ENCODE measurements at regions of chr3 and their contacts with region 1.

Region 1: GRCh38 chr3:32570421-32571191 is at the start of gene DYNC1LI1:
- DNase-seq: peak; percentile 94 to 95
- ATAC-seq: peak; percentile 88 to 91
- H3K4me3 ChIP-seq: peak within 1 kb of the TSS; percentile 73 to 98 (median 86)
- H3K27ac ChIP-seq: peak within 1 kb of the TSS; percentile 96 to 99 (median 98)
- H3K4me1 ChIP-seq: peaks cover 17 to 28% of the 10 kb centered on the region in 2 donors
- H3K27me3 ChIP-seq: no peaks in the 10 kb centered on the region
- CTCF ChIP-seq: peak in 1 of 5 experiments; percentile 7
- POLR2A ChIP-seq: peak; percentile 87 to 88
- total RNA-seq, gene DYNC1LI1: 44.2 to 51.0 (median 47.9) TPM

Region 2: DNA sequence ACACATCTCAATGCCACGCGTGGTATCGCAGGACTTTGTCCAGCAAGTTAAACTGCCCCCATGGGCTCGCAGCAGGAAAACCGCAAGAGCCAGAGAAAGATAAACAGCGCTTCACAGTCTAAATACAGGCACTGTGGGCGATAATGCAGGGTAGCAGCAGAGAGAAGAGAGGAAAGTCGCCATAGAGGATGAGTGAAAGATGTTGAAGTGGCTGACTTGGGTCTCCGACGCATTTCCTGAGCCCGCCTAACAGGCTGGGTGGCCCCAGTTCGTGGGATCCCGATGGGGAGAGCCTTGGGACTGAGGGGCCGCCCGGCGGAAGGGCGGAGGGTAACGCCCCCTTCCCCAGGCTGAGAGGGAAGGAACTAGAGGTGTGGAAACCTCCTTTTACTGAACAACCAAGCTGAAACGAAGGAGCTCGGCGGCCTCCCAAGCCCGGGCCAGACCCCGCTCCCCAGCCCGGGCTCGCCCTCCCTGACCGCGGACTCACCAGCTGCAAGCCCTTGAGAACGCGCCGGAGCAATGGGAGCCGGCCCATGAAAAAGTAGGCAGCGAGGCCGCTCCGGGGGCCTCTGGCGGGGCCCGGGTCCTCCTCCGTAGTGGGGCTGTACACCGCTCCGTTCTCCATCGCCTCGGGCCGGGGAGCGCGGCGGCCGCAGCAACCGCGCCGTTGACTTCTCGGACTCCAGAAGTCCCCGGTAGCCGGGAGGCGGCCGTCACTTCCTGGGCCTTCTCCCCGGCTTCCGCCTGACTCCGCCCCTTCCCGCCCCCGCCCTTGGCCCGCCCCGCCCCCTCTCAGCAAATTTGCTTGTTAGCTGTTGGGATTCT is 68.3 kb before region 1 on chr3 and contains the start of gene CMTM6:
- in situ Hi-C with region 1: no loop called
- intact Hi-C with region 1: loop called (anchors 2 kb)
- DNase-seq: peak; percentile 68 to 71
- ATAC-seq: peak; percentile 95 to 96
- H3K4me3 ChIP-seq: peak within 1 kb of the TSS; percentile 86 to 99 (median 93)
- H3K27ac ChIP-seq: peak within 1 kb of the TSS; percentile 91 to 94 (median 94)
- H3K4me1 ChIP-seq: peaks cover 9 to 14% of the 10 kb centered on the region in 2 donors
- H3K27me3 ChIP-seq: no peaks in the 10 kb centered on the region
- CTCF ChIP-seq: no peak
- POLR2A ChIP-seq: peak; percentile 62 to 63
- total RNA-seq, gene CMTM6: 3.7 to 8.8 (median 7.3) TPM

Region 3: DNA sequence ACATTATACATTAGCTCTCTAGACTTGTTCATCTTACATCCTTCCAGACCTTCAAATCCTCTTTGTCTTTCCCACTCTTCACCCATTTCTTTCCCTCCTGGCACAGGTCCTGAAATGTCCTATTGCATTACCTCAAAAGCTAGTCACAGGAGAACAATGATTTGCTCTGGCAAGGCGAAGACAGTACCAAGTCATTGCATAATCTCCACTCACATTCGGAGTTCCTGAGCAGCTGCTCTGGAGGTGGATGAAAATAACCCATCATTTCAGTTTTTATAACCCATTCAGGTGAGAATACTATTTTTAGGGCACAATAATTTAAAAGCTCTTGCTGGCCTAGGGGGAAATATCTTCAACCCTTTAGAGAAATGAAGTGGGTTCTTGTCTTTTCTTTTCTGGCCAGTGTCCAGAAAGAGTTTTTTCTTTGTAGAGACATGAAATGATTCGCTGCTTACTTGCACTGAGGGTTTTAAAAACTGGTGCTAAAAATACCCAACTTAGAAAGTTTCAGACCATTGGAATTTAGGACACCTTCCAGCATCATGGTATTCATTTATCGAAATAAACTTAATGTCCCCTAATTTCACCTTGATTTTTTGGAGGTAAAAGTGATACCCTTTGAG is 23.4 kb after region 1 on chr3:
- in situ Hi-C with region 1: no loop called
- intact Hi-C with region 1: loop called (anchors 2 kb)
- DNase-seq: no peak
- ATAC-seq: peak; percentile 39 to 56
- H3K4me3 ChIP-seq: no peak overlapping the region
- H3K27ac ChIP-seq: no peak overlapping the region
- H3K4me1 ChIP-seq: peaks cover 10 to 23% of the 10 kb centered on the region in 2 donors
- H3K27me3 ChIP-seq: no peaks in the 10 kb centered on the region
- CTCF ChIP-seq: no peak
- POLR2A ChIP-seq: no peak

Region 4: GRCh38 chr3:32684800-32685542 is 114.4 kb after region 1 on chr3 and contains the start of gene CNOT10:
- in situ Hi-C with region 1: no loop called
- intact Hi-C with region 1: loop called (anchors 1 kb)
- DNase-seq: peak; percentile 86 to 90
- ATAC-seq: peak; percentile 96
- H3K4me3 ChIP-seq: peak within 1 kb of the TSS; percentile 69 to 98 (median 92)
- H3K27ac ChIP-seq: peak within 1 kb of the TSS; percentile 80 to 87 (median 82)
- H3K4me1 ChIP-seq: peaks cover 13 to 16% of the 10 kb centered on the region in 2 donors
- H3K27me3 ChIP-seq: no peaks in the 10 kb centered on the region
- CTCF ChIP-seq: peak in 2 of 5 experiments; percentile 9 to 38
- POLR2A ChIP-seq: peak in 1 of 2 donors; percentile 64
- total RNA-seq, gene CNOT10: 10.2 to 16.8 (median 10.9) TPM

Region 5: DNA sequence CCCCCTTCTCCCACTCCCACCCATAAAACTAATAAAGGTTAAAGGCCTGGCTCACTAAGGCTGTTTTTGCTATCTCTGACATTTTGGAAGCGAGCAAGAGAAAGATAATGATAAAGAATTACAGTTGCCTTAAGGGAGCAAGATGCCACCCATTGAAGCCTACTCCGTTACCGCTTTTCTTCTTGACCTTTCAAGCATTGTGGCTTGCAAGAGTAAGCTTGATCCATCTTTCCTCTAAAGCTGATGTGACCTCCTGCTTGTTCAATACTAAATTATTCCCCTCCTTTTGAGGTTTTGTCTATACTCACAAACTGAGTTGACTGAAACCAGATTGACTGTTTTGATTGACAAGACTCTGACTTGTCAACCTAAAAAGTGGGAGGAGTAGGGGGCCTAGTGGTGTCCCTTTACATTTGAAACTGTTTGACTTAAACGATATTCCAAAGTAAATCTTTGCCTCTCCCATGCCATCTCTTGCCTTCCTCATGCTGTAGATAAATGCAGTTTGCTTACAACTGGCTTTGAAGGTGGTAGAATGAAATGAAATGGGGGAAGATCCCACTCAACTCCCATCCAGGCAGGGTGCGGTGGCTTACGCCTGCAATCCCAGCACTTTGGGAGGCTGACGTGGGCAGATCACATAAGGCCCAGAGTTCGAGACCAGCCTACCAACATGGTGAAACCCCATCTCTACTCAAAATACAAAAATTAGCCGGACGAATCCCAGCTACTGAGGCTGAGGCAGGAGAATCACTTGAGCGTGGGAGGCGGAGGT is 255.2 kb after region 1 on chr3:
- in situ Hi-C with region 1: no loop called
- intact Hi-C with region 1: no loop called
- DNase-seq: no peak
- ATAC-seq: no peak
- H3K4me3 ChIP-seq: no peak overlapping the region
- H3K27ac ChIP-seq: no peak overlapping the region
- H3K4me1 ChIP-seq: no peaks in the 10 kb centered on the region
- H3K27me3 ChIP-seq: peaks cover 28 to 40% (median 35%) of the 10 kb centered on the region in 3 donors
- CTCF ChIP-seq: no peak
- POLR2A ChIP-seq: no peak

Region 6: DNA sequence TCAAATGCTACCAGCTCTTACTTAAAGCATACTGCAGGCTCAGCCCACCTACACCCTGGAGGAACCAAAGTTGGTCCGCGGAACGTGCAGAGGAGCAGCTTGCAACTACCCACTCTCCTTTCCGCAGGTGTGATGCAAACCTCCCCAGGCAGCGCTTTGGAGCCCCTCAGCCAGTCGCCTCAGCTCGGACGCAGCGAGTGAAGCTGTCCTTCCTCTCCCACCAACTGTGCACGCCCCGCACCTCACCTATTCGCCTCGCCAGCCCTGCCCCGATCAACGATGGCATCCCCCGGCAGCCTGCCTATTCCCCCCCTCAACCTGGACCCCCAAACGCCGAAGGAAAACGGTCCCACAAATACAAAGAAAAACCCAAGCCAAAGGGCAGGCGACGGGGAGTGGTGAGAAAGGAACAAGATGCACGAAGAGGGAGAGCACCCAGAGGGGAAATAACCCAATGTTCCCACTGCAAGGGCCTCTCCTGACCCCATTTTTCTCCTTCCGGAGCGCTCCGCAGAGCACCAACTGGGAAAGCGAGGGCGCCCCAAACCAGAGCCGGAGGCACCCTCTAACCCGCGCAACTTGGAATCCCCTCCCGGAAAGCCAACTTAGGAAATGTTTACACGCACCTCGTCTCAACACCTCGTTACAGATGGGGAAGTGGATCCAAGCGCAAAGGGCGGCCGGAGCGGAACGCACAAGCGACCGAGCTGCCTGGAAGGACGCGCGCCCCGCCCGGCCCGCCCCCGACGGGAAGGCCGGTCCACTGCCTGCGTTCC is 525.7 kb after region 1 on chr3:
- in situ Hi-C with region 1: no loop called
- intact Hi-C with region 1: loop called (anchors 5 kb)
- DNase-seq: peak in 1 of 2 donors; percentile 25
- ATAC-seq: peak; percentile 51 to 59
- H3K4me3 ChIP-seq: peak overlapping the region; percentile 72 to 100 (median 94)
- H3K27ac ChIP-seq: peak overlapping the region; percentile 81 to 99 (median 97)
- H3K4me1 ChIP-seq: peaks cover 12 to 33% of the 10 kb centered on the region in 2 donors
- H3K27me3 ChIP-seq: no peaks in the 10 kb centered on the region
- CTCF ChIP-seq: no peak
- POLR2A ChIP-seq: no peak